ENCODE measurements at regions of chr3 and their contacts with region 1.

Region 1: GRCh38 chr3:67654099-67654843 is at the start of gene SUCLG2:
- DNase-seq: peak; percentile 71 to 85 (median 77)
- H3K4me3 ChIP-seq: peak within 1 kb of the TSS; percentile 71 to 80
- H3K4me3 Mint-ChIP-seq: peak within 1 kb of the TSS; percentile 84 to 90 (median 88)
- H3K27ac ChIP-seq: peak within 1 kb of the TSS; percentile 67
- H3K27ac Mint-ChIP-seq: peak within 1 kb of the TSS; percentile 91 to 97 (median 95)
- H3K4me1 ChIP-seq: peaks cover 67% of the 10 kb centered on the region
- H3K4me1 Mint-ChIP-seq: peaks cover 48 to 76% (median 60%) of the 10 kb centered on the region in 4 donors
- H3K27me3 ChIP-seq: no peaks in the 10 kb centered on the region
- H3K27me3 Mint-ChIP-seq: no peaks in the 10 kb centered on the region
- total RNA-seq, gene SUCLG2: 46.1 to 48.0 TPM

Region 2: GRCh38 chr3:66302288-66302687 is 1352.0 kb before region 1 on chr3:
- CTCF ChIA-PET with region 1: no interaction called
- POLR2A ChIA-PET with region 1: interaction called, 5 read pairs
- intact Hi-C with region 1: loop called (anchors 5 kb)
- DNase-seq: peak; percentile 81 to 88 (median 83)
- H3K4me3 ChIP-seq: no peak overlapping the region
- H3K4me3 Mint-ChIP-seq: peak overlapping the region in 7 of 8 donors; percentile 11 to 79 (median 68)
- H3K27ac ChIP-seq: peak overlapping the region; percentile 73
- H3K27ac Mint-ChIP-seq: peak overlapping the region in 3 of 7 donors; percentile 97 to 99 (median 98)
- H3K4me1 ChIP-seq: peaks cover 93% of the 10 kb centered on the region
- H3K4me1 Mint-ChIP-seq: peaks cover 22 to 71% (median 43%) of the 10 kb centered on the region in 4 donors
- H3K27me3 ChIP-seq: no peaks in the 10 kb centered on the region
- H3K27me3 Mint-ChIP-seq: no peaks in the 10 kb centered on the region

Region 3: DNA sequence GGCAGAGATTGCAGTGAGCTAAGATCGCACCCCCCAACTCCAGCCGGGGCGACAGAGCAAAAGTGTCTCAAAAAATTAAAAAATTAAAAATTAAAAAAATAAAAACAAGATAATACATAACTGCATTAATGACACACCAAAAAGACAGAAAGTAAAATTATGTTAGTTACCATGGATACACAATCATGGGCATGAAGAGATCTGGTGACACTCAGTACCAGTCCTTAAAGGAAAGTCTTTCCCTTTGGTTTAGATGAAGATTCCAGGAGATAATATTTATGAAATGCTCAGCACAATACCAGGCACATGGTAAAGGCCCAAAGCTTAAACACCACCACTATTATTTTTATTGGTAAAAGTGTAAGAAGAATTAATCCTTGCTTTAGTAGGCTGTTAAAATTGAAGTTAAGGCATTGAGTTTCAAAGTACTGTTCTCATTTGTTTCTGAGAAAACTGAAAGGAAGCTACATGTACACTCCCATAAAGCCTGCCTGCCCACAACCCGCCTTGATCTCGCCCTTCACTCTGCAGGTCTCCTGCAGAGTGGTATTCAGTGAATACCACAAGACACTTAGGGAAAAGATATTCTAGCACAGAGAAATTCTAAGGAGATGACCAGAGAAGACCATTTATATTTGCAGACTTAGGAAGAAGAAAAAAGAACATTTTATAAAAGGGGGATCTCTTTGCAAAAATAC is 52.2 kb before region 1 on chr3:
- CTCF ChIA-PET with region 1: interaction called, 3 read pairs
- POLR2A ChIA-PET with region 1: interaction called, 4 read pairs
- intact Hi-C with region 1: loop called (anchors 5 kb)
- DNase-seq: peak in 2 of 5 donors; percentile 11 to 18
- H3K4me3 ChIP-seq: no peak overlapping the region
- H3K4me3 Mint-ChIP-seq: peak overlapping the region in 7 of 8 donors; percentile 59 to 87 (median 80)
- H3K27ac ChIP-seq: no peak overlapping the region
- H3K27ac Mint-ChIP-seq: peak overlapping the region; percentile 19 to 87 (median 77)
- H3K4me1 ChIP-seq: peaks cover 63% of the 10 kb centered on the region
- H3K4me1 Mint-ChIP-seq: peaks cover 54 to 84% (median 70%) of the 10 kb centered on the region in 4 donors
- H3K27me3 ChIP-seq: no peaks in the 10 kb centered on the region
- H3K27me3 Mint-ChIP-seq: no peaks in the 10 kb centered on the region

Region 4: DNA sequence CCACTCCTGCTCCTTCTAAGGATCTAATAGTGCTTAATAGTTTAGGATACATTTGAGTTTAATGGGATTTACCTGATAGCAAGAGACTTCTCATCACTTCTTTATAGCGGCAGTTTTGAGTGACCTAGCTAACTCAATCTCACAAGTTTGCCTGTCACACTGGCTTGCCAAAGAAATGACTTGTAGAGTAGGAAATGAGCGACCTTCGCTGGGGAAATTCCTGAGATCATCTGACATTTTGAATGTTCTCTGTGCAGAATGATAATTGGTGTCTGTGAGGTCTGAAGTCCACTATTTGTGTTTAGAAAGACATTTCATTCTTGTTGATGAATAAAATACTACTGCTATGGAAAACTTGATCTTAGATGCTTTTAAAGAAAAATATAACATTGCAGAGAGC is 30.2 kb before region 1 on chr3:
- CTCF ChIA-PET with region 1: no interaction called
- POLR2A ChIA-PET with region 1: no interaction called
- intact Hi-C with region 1: no loop called
- DNase-seq: no peak
- H3K4me3 ChIP-seq: no peak overlapping the region
- H3K4me3 Mint-ChIP-seq: no peak overlapping the region
- H3K27ac ChIP-seq: no peak overlapping the region
- H3K27ac Mint-ChIP-seq: no peak overlapping the region
- H3K4me1 ChIP-seq: peaks cover 5% of the 10 kb centered on the region
- H3K4me1 Mint-ChIP-seq: peaks cover 26 to 72% (median 53%) of the 10 kb centered on the region in 4 donors
- H3K27me3 ChIP-seq: no peaks in the 10 kb centered on the region
- H3K27me3 Mint-ChIP-seq: no peaks in the 10 kb centered on the region

Region 5: DNA sequence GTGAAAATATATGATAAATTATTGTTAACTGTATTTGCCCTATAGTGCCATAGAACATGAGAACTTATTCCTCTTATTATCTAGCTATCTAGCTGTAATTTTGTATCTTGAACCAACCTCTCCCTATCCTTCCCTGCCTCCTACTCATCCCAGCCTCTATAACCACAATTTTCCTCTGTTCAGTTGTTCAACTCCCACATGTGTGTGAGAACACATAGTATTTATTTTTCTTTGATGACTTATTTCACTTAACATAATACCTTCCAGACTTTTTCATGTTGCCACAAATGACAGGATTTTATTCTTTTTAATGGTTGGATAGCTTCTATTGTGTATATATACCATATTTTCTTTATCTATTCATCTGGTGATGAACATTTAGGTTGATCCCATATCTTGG is 85.6 kb after region 1 on chr3:
- CTCF ChIA-PET with region 1: interaction called, 5 read pairs
- POLR2A ChIA-PET with region 1: interaction called, 47 read pairs
- intact Hi-C with region 1: loop called (anchors 2 kb)
- DNase-seq: no peak
- H3K4me3 ChIP-seq: no peak overlapping the region
- H3K4me3 Mint-ChIP-seq: peak overlapping the region in 2 of 8 donors; percentile 0 to 11
- H3K27ac ChIP-seq: no peak overlapping the region
- H3K27ac Mint-ChIP-seq: peak overlapping the region; percentile 1 to 90 (median 83)
- H3K4me1 ChIP-seq: peaks cover 39% of the 10 kb centered on the region
- H3K4me1 Mint-ChIP-seq: peaks cover 35 to 61% (median 48%) of the 10 kb centered on the region in 4 donors
- H3K27me3 ChIP-seq: no peaks in the 10 kb centered on the region
- H3K27me3 Mint-ChIP-seq: no peaks in the 10 kb centered on the region

Region 6: GRCh38 chr3:67947808-67948508 is 293.7 kb after region 1 on chr3:
- CTCF ChIA-PET with region 1: no interaction called
- POLR2A ChIA-PET with region 1: interaction called, 12 read pairs
- intact Hi-C with region 1: loop called (anchors 10 kb)
- DNase-seq: peak; percentile 75 to 86 (median 82)
- H3K4me3 ChIP-seq: peak overlapping the region; percentile 24 to 51
- H3K4me3 Mint-ChIP-seq: peak overlapping the region; percentile 81 to 95 (median 84)
- H3K27ac ChIP-seq: no peak overlapping the region
- H3K27ac Mint-ChIP-seq: peak overlapping the region; percentile 59 to 95 (median 86)
- H3K4me1 ChIP-seq: peaks cover 27% of the 10 kb centered on the region
- H3K4me1 Mint-ChIP-seq: peaks cover 21 to 46% (median 29%) of the 10 kb centered on the region in 4 donors
- H3K27me3 ChIP-seq: no peaks in the 10 kb centered on the region
- H3K27me3 Mint-ChIP-seq: no peaks in the 10 kb centered on the region

Region 7: DNA sequence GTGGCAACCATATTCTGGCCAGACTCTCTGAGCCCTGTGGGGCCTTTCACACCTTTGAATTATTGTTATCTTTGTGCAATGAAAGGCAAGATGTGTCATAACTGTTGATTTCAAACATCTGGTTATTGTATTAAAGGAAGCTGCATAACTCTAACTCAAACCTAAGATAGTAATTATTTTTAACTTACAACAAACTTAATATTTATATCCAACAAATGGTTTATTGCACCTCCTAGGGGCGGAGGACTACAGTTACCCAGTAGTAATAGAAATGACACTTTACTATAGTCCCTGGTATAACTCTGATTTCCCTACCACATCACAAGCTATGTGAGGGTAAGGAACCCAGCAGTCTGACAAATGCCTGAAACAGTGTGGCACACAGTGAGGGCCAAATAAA is 364.0 kb after region 1 on chr3:
- CTCF ChIA-PET with region 1: no interaction called
- POLR2A ChIA-PET with region 1: no interaction called
- intact Hi-C with region 1: no loop called
- DNase-seq: no peak
- H3K4me3 ChIP-seq: no peak overlapping the region
- H3K4me3 Mint-ChIP-seq: no peak overlapping the region
- H3K27ac ChIP-seq: no peak overlapping the region
- H3K27ac Mint-ChIP-seq: no peak overlapping the region
- H3K4me1 ChIP-seq: no peaks in the 10 kb centered on the region
- H3K4me1 Mint-ChIP-seq: peaks cover 4 to 9% (median 4%) of the 10 kb centered on the region in 4 donors
- H3K27me3 ChIP-seq: no peaks in the 10 kb centered on the region
- H3K27me3 Mint-ChIP-seq: no peaks in the 10 kb centered on the region

Region 8: DNA sequence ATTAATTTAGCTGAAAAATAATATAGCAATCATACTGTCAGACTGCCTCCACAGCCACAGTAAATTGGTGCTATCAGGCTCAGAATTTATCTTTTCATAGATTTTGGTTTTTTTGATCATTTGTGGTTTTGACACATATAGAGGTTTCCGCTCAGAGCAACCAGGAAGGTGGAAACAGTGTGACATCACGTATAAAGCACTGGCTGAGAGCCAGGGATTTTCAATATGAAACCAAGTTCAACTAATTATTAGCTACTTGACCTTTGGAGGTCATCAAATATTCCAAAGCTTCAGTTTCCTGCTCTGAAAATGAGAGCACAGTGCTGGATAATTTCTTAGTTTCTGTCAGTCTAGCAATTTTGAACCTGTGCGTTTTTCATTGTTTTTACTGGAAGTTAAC is 433.9 kb after region 1 on chr3:
- CTCF ChIA-PET with region 1: no interaction called
- POLR2A ChIA-PET with region 1: no interaction called
- intact Hi-C with region 1: loop called (anchors 10 kb)
- DNase-seq: peak; percentile 76 to 83 (median 79)
- H3K4me3 ChIP-seq: no peak overlapping the region
- H3K4me3 Mint-ChIP-seq: peak overlapping the region in 7 of 8 donors; percentile 29 to 79 (median 64)
- H3K27ac ChIP-seq: no peak overlapping the region
- H3K27ac Mint-ChIP-seq: peak overlapping the region; percentile 64 to 92 (median 86)
- H3K4me1 ChIP-seq: peaks cover 62% of the 10 kb centered on the region
- H3K4me1 Mint-ChIP-seq: peaks cover 50 to 92% (median 69%) of the 10 kb centered on the region in 4 donors
- H3K27me3 ChIP-seq: no peaks in the 10 kb centered on the region
- H3K27me3 Mint-ChIP-seq: no peaks in the 10 kb centered on the region